A549 (cell line): ENCODE measurements at regions of chr18 and their contacts with region 1.

Region 1: DNA sequence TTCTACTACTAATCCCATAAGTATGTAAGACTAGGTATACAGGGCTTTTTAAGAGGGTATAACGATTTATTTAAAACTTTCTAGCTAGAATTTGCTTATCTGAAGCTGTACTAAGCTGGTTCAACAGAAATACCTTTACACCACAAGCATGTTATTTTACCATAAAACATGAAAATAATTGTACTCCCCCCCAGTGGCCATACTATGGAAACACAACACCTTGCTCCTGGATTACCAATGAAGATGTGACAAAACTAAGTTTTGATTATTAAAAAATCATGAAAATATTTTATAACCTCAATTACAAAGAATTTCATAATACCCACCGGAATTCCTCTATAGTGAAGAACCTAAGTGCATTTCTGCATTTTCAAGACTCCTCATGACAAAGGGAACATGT is 27.3 kb downstream of the LPIN2 start:
- DNase-seq: peak in 1 of 2 experiments; percentile 29
- ATAC-seq: no peak
- H3K4me3 ChIP-seq: no peak overlapping the region
- H3K27ac ChIP-seq: peak overlapping the region; percentile 77 to 86
- H3K4me1 ChIP-seq: peaks cover 84% of the 10 kb centered on the region
- CTCF ChIP-seq: peak; percentile 38
- EP300 ChIP-seq: no peak
- POLR2A ChIP-seq: no peak
- RAD21 ChIP-seq: peak; percentile 40 to 44; a peak in 3 of 5 replicates

Region 2: GRCh38 chr18:2797951-2798350 is 187.7 kb before region 1 on chr18:
- CTCF ChIA-PET with region 1: no interaction called
- POLR2A ChIA-PET with region 1: no interaction called
- DNase-seq: no peak
- ATAC-seq: no peak
- H3K4me3 ChIP-seq: no peak overlapping the region
- H3K27ac ChIP-seq: no peak overlapping the region
- H3K4me1 ChIP-seq: no peaks in the 10 kb centered on the region
- CTCF ChIP-seq: no peak
- EP300 ChIP-seq: no peak
- POLR2A ChIP-seq: no peak
- RAD21 ChIP-seq: no peak

Region 3: GRCh38 chr18:2948038-2948437 is 37.6 kb before region 1 on chr18:
- CTCF ChIA-PET with region 1: interaction called, 12 read pairs
- POLR2A ChIA-PET with region 1: no interaction called
- DNase-seq: peak; percentile 15 to 54
- ATAC-seq: peak; percentile 59 to 70; a peak in 5 of 6 replicates
- H3K4me3 ChIP-seq: no peak overlapping the region
- H3K27ac ChIP-seq: no peak overlapping the region
- H3K4me1 ChIP-seq: no peaks in the 10 kb centered on the region
- CTCF ChIP-seq: peak; percentile 47
- EP300 ChIP-seq: no peak
- POLR2A ChIP-seq: no peak
- RAD21 ChIP-seq: peak; percentile 33 to 36; a peak in 2 of 5 replicates

Region 4: GRCh38 chr18:3012964-3013804 is 27.6 kb after region 1 on chr18 and contains the start of gene LPIN2:
- CTCF ChIA-PET with region 1: no interaction called
- POLR2A ChIA-PET with region 1: interaction called, 10 read pairs
- DNase-seq: peak; percentile 80 to 92
- ATAC-seq: peak; percentile 83 to 89
- H3K4me3 ChIP-seq: peak within 1 kb of the TSS; percentile 99
- H3K27ac ChIP-seq: peak within 1 kb of the TSS; percentile 99 to 100
- H3K4me1 ChIP-seq: peaks cover 36% of the 10 kb centered on the region
- CTCF ChIP-seq: no peak
- EP300 ChIP-seq: no peak
- POLR2A ChIP-seq: no peak
- RAD21 ChIP-seq: no peak
- polyA plus RNA-seq, gene LPIN2: 21.1 and 23.7 TPM in 2 replicates